Panc1 (cell line): ENCODE measurements at regions of chr13 and their contacts with region 1.

Region 1: GRCh38 chr13:33799950-33800592 is 17.9 kb upstream of the RFC3 start:
- DNase-seq: no peak
- ATAC-seq: no peak
- H3K4me3 ChIP-seq: no peak overlapping the region
- H3K27ac ChIP-seq: no peak overlapping the region
- H3K4me1 ChIP-seq: no peaks in the 10 kb centered on the region; the same call in 1 of the 2 replicates
- H3K27me3 ChIP-seq: no peaks in the 10 kb centered on the region
- CTCF ChIP-seq: peak; percentile 53; the same call in 1 of the 2 replicates

Region 2: DNA sequence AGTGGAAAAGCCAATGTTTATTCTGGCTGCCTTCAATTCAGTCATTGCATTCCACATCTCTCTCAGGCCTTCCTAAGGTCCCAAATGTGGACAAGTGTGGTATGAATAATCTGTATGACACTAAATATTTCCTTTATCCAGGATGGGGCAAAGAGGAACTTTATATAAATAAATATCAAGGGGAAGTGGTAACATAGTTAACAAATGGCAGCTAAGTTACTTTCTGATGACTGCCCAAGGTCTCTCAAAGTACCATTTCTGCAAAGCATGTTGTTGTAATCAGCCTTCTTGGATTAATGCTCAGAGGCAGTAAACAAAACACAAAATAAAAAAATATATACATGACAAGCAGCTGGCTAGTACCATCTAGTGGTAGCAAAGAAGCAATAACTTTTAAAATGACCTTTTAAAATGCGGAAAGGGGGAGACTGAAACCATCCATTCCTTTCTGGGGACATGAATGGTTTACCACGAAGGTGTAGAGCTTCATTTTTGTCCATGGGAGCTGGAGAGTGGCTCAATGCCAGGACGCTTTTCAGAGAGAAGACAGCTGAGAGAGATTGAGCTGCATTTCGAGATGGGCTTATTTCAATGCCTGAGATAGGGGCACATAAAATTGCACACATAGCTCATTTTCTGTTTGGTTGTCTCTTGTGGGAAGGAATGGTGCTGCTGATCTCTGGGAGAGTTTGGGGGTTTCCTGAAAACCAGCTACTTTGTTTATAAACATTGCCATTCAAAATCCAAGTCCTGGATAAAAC is 277.1 kb after region 1 on chr13:
- CTCF ChIA-PET with region 1: interaction called, 3 read pairs
- POLR2A ChIA-PET with region 1: no interaction called
- in situ Hi-C with region 1: no loop called
- intact Hi-C with region 1: loop called (anchors 10 kb)
- DNase-seq: no peak
- ATAC-seq: no peak
- H3K4me3 ChIP-seq: no peak overlapping the region; a peak in 1 of 4 replicates
- H3K27ac ChIP-seq: no peak overlapping the region
- H3K4me1 ChIP-seq: no peaks in the 10 kb centered on the region
- H3K27me3 ChIP-seq: no peaks in the 10 kb centered on the region
- CTCF ChIP-seq: peak; percentile 66

Region 3: DNA sequence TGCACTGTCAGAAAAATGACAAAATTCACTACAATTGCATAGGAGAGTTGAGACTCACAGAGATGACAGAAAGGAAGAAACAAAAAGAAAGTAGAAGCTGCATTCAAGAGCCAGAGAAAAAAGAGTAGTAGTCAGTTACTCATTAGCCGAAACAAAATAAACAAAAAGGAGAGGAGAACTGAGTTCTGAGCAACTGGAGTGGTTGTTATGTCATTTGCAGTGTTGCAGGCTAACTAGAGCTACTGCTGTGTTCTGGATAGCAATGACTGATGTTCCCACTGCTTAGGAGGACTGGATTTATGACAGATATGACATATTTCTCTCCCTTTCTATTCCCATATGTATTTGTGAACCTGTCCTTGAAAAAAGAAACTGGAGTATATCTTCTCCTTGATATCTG is 500.5 kb after region 1 on chr13:
- CTCF ChIA-PET with region 1: no interaction called
- POLR2A ChIA-PET with region 1: no interaction called
- in situ Hi-C with region 1: no loop called
- intact Hi-C with region 1: no loop called
- DNase-seq: no peak
- ATAC-seq: no peak
- H3K4me3 ChIP-seq: no peak overlapping the region
- H3K27ac ChIP-seq: no peak overlapping the region
- H3K4me1 ChIP-seq: no peaks in the 10 kb centered on the region
- H3K27me3 ChIP-seq: no peaks in the 10 kb centered on the region
- CTCF ChIP-seq: no peak

Region 4: DNA sequence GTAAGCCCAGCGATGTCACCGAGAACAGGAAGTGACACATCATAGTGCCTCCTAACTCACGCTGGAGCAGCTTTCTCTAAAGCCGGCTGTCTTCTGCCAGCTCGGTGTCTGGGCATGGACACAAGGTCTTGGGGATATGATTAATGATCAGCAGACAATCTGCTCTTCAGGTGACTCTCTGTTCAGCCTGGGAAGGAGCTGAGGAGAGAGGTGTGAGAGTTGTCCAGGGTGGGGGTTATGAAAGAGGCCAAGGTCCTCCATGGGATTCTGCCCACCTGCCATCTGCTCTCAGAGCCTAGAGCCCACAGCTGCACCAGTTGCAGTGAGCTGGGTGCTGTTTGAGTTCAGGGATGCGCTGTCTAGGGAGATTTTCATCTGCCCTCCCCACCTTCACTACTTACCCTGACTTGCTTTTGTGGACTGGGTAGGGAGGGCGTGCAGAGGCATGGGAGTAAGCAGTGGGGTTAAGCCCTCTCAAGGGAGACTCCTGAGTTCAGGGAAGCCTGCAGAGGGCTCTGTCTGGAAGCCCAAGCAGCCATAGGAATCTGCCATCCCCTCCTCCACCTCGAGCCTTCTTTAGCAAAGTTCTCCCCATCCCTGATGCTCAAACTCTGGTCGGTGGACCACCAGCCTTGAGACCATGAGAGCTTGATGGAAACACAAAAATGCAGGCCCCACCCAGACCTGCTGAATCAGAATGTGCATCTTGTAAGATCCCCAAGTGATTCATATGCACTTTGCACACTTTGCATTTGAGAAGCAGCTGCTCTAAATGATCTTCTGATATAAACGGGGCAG is 557.6 kb after region 1 on chr13:
- CTCF ChIA-PET with region 1: no interaction called
- POLR2A ChIA-PET with region 1: no interaction called
- in situ Hi-C with region 1: no loop called
- intact Hi-C with region 1: no loop called
- DNase-seq: peak; percentile 18
- ATAC-seq: 0 out of 2 replicates have a peak, but pooled peaks have one; percentile 63
- H3K4me3 ChIP-seq: no peak overlapping the region
- H3K27ac ChIP-seq: no peak overlapping the region
- H3K4me1 ChIP-seq: no peaks in the 10 kb centered on the region
- H3K27me3 ChIP-seq: no peaks in the 10 kb centered on the region
- CTCF ChIP-seq: no peak